ENCODE measurements at regions of chr1 and their contacts with region 1.

Region 1: DNA sequence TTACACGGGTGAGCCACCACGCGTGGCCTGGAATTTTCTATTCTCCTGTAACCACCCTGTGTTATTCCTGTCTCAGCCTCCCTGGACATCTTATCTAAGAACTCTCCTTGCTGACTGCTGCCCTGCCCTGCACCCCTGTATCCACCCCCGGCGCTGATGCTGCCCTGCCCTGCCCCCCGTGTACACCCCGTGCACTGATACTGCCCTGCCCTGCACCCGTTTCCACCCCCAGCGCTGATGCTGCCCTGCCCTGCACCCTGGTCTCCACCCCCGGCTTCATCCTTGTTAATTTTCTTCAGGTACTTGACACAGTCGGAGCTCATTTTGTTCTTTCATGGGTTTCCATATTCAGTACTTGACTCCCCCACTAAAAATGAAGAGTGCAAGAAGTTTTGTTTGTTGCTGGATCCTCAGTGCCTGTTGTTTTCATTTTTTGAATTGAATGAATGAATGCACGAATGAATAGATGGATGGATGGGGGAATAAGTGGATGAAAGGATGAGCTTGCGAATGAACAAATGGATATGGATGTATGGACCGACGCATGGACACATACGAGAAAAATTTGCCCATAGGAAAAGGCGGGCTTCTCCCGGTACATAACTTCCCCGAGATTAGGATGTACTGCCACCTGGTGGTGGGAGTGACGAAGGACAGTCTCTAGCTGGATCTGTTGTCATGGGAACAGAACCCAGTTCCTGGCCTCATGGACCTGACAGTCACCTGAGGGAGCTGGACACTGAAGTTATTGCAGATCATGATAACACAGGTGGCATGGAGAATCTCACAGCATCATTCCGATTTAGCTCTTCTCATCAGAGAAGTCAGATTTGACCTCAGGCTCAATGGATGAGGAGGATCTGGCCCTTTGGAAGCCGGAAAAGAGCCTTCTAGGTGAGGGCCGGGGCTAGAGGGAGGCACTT is 14.9 kb downstream of the AADACL4 start:
- DNase-seq: peak; percentile 57 to 65 (median 57)
- H3K4me3 ChIP-seq: no peak overlapping the region
- H3K4me3 Mint-ChIP-seq: peak overlapping the region in 2 of 8 donors; percentile 3 to 29
- H3K27ac ChIP-seq: no peak overlapping the region
- H3K27ac Mint-ChIP-seq: no peak overlapping the region
- H3K4me1 ChIP-seq: peaks cover 4% of the 10 kb centered on the region
- H3K4me1 Mint-ChIP-seq: peaks cover 4 to 8% (median 6%) of the 10 kb centered on the region in 4 donors
- H3K27me3 ChIP-seq: no peaks in the 10 kb centered on the region
- H3K27me3 Mint-ChIP-seq: peaks cover 3 to 6% of the 10 kb centered on the region in 2 donors

Region 2: GRCh38 chr1:12113433-12114339 is 545.1 kb before region 1 on chr1:
- CTCF ChIA-PET with region 1: interaction called, 6 read pairs
- POLR2A ChIA-PET with region 1: no interaction called
- intact Hi-C with region 1: loop called (anchors 1 kb)
- DNase-seq: no peak
- H3K4me3 ChIP-seq: no peak overlapping the region
- H3K4me3 Mint-ChIP-seq: no peak overlapping the region
- H3K27ac ChIP-seq: no peak overlapping the region
- H3K27ac Mint-ChIP-seq: no peak overlapping the region
- H3K4me1 ChIP-seq: peaks cover 4% of the 10 kb centered on the region
- H3K4me1 Mint-ChIP-seq: peaks cover 4 to 12% (median 8%) of the 10 kb centered on the region in 4 donors
- H3K27me3 ChIP-seq: no peaks in the 10 kb centered on the region
- H3K27me3 Mint-ChIP-seq: no peaks in the 10 kb centered on the region

Region 3: DNA sequence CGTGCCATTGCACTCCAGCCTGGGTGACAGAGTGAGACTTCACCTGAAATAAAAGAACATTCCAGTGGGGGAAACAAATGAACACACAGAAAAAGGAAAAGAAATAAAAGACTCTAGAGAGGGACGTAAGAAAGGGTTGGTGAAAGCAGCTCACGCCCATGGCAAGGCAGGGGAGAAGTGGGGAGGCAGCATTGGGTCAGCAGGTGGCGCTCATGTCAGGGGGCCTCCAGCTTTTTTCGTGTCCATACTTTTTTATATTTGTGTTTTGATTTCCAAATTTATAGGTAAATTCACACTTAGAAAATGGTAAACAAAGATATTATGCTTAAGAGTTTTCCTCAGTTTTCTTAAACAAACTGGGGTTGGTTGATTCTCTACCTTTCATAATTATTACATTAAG is 383.4 kb before region 1 on chr1:
- CTCF ChIA-PET with region 1: interaction called, 32 read pairs
- POLR2A ChIA-PET with region 1: interaction called, 3 read pairs
- intact Hi-C with region 1: loop called (anchors 1 kb)
- DNase-seq: peak in 4 of 5 donors; percentile 7 to 19 (median 14)
- H3K4me3 ChIP-seq: no peak overlapping the region
- H3K4me3 Mint-ChIP-seq: no peak overlapping the region
- H3K27ac ChIP-seq: no peak overlapping the region
- H3K27ac Mint-ChIP-seq: peak overlapping the region in 1 of 7 donors; percentile 82
- H3K4me1 ChIP-seq: no peaks in the 10 kb centered on the region
- H3K4me1 Mint-ChIP-seq: peaks cover 5 to 9% (median 8%) of the 10 kb centered on the region in 4 donors
- H3K27me3 ChIP-seq: no peaks in the 10 kb centered on the region
- H3K27me3 Mint-ChIP-seq: no peaks in the 10 kb centered on the region

Region 4: GRCh38 chr1:12314333-12314903 is 344.4 kb before region 1 on chr1:
- CTCF ChIA-PET with region 1: interaction called, 104 read pairs
- POLR2A ChIA-PET with region 1: no interaction called
- intact Hi-C with region 1: loop called (anchors 1 kb)
- DNase-seq: peak in 4 of 5 donors; percentile 18 to 32 (median 26)
- H3K4me3 ChIP-seq: no peak overlapping the region
- H3K4me3 Mint-ChIP-seq: no peak overlapping the region
- H3K27ac ChIP-seq: no peak overlapping the region
- H3K27ac Mint-ChIP-seq: peak overlapping the region in 1 of 7 donors; percentile 48
- H3K4me1 ChIP-seq: no peaks in the 10 kb centered on the region
- H3K4me1 Mint-ChIP-seq: peaks cover 0 to 2% (median 0%) of the 10 kb centered on the region in 4 donors
- H3K27me3 ChIP-seq: no peaks in the 10 kb centered on the region
- H3K27me3 Mint-ChIP-seq: no peaks in the 10 kb centered on the region

Region 5: GRCh38 chr1:12407050-12407961 is 251.5 kb before region 1 on chr1:
- CTCF ChIA-PET with region 1: interaction called, 8 read pairs
- POLR2A ChIA-PET with region 1: no interaction called
- intact Hi-C with region 1: loop called (anchors 1 kb)
- DNase-seq: peak in 3 of 5 donors; percentile 25 to 31 (median 27)
- H3K4me3 ChIP-seq: no peak overlapping the region
- H3K4me3 Mint-ChIP-seq: no peak overlapping the region
- H3K27ac ChIP-seq: no peak overlapping the region
- H3K27ac Mint-ChIP-seq: peak overlapping the region in 2 of 7 donors; percentile 58 to 72
- H3K4me1 ChIP-seq: no peaks in the 10 kb centered on the region
- H3K4me1 Mint-ChIP-seq: peaks cover 0 to 10% (median 8%) of the 10 kb centered on the region in 4 donors
- H3K27me3 ChIP-seq: no peaks in the 10 kb centered on the region
- H3K27me3 Mint-ChIP-seq: no peaks in the 10 kb centered on the region

Region 6: GRCh38 chr1:12579793-12580499 is 78.8 kb before region 1 on chr1:
- CTCF ChIA-PET with region 1: no interaction called
- POLR2A ChIA-PET with region 1: no interaction called
- intact Hi-C with region 1: no loop called
- DNase-seq: no peak
- H3K4me3 ChIP-seq: no peak overlapping the region
- H3K4me3 Mint-ChIP-seq: no peak overlapping the region
- H3K27ac ChIP-seq: no peak overlapping the region
- H3K27ac Mint-ChIP-seq: no peak overlapping the region
- H3K4me1 ChIP-seq: no peaks in the 10 kb centered on the region
- H3K4me1 Mint-ChIP-seq: peaks cover 0 to 5% (median 1%) of the 10 kb centered on the region in 4 donors
- H3K27me3 ChIP-seq: no peaks in the 10 kb centered on the region
- H3K27me3 Mint-ChIP-seq: no peaks in the 10 kb centered on the region

Region 7: GRCh38 chr1:12604114-12604874 is 54.5 kb before region 1 on chr1:
- CTCF ChIA-PET with region 1: interaction called, 14 read pairs
- POLR2A ChIA-PET with region 1: no interaction called
- intact Hi-C with region 1: loop called (anchors 1 kb)
- DNase-seq: peak; percentile 70 to 91 (median 76)
- H3K4me3 ChIP-seq: no peak overlapping the region
- H3K4me3 Mint-ChIP-seq: peak overlapping the region in 7 of 8 donors; percentile 59 to 81 (median 68)
- H3K27ac ChIP-seq: peak overlapping the region; percentile 27
- H3K27ac Mint-ChIP-seq: peak overlapping the region; percentile 57 to 96 (median 91)
- H3K4me1 ChIP-seq: peaks cover 51% of the 10 kb centered on the region
- H3K4me1 Mint-ChIP-seq: peaks cover 28 to 85% (median 54%) of the 10 kb centered on the region in 4 donors
- H3K27me3 ChIP-seq: no peaks in the 10 kb centered on the region
- H3K27me3 Mint-ChIP-seq: no peaks in the 10 kb centered on the region

Region 8: DNA sequence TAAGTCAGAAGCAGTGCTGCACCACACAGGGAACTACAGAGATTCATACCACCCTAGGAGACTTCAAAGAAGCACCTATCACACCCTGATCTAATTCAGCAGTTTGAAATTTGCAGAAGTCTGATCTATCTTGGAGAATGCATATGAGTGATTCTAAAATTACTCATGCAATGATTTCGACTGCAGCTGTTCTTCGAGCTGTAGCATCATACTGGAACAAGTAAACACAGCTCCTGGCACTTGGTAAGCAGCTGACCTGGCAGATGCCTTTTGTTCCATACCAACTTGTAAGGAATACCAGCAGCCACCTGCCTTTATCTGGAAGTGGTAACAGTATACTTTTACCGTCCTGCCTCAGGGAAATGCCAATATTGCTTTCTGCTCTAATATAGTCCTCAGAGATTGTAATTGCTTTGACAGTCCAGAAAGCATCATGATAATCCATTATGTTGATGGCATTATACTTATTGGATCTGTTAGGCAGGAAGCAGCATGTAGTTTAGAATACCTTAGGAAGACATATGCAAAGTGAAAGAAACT is 10.8 kb after region 1 on chr1:
- CTCF ChIA-PET with region 1: interaction called, 27 read pairs
- POLR2A ChIA-PET with region 1: no interaction called
- intact Hi-C with region 1: no loop called
- DNase-seq: no peak
- H3K4me3 ChIP-seq: no peak overlapping the region
- H3K4me3 Mint-ChIP-seq: no peak overlapping the region
- H3K27ac ChIP-seq: no peak overlapping the region
- H3K27ac Mint-ChIP-seq: no peak overlapping the region
- H3K4me1 ChIP-seq: no peaks in the 10 kb centered on the region
- H3K4me1 Mint-ChIP-seq: no peaks in the 10 kb centered on the region
- H3K27me3 ChIP-seq: no peaks in the 10 kb centered on the region
- H3K27me3 Mint-ChIP-seq: peaks cover 2 to 10% of the 10 kb centered on the region in 2 donors

Measured in CD4-positive, alpha-beta memory T cell (primary cell).